Activated CD8-positive, alpha-beta memory T cell treated with anti-CD3 and anti-CD28 coated beads, Interleukin-2, amount 10 ng/mL, durations not matched to agents 7 days and 5 days (primary cell): ENCODE measurements at regions of chr2 and their contacts with region 1.

Region 1: GRCh38 chr2:68751397-68752339 is 17.1 kb downstream of the ARHGAP25 start:
- DNase-seq: peak; percentile 95
- ATAC-seq: peak; percentile 92
- H3K4me3 Mint-ChIP-seq: peak overlapping the region; percentile 27
- H3K27ac Mint-ChIP-seq: peak overlapping the region; percentile 77
- H3K4me1 Mint-ChIP-seq: peaks cover 88% of the 10 kb centered on the region
- H3K27me3 Mint-ChIP-seq: no peaks in the 10 kb centered on the region

Region 2: DNA sequence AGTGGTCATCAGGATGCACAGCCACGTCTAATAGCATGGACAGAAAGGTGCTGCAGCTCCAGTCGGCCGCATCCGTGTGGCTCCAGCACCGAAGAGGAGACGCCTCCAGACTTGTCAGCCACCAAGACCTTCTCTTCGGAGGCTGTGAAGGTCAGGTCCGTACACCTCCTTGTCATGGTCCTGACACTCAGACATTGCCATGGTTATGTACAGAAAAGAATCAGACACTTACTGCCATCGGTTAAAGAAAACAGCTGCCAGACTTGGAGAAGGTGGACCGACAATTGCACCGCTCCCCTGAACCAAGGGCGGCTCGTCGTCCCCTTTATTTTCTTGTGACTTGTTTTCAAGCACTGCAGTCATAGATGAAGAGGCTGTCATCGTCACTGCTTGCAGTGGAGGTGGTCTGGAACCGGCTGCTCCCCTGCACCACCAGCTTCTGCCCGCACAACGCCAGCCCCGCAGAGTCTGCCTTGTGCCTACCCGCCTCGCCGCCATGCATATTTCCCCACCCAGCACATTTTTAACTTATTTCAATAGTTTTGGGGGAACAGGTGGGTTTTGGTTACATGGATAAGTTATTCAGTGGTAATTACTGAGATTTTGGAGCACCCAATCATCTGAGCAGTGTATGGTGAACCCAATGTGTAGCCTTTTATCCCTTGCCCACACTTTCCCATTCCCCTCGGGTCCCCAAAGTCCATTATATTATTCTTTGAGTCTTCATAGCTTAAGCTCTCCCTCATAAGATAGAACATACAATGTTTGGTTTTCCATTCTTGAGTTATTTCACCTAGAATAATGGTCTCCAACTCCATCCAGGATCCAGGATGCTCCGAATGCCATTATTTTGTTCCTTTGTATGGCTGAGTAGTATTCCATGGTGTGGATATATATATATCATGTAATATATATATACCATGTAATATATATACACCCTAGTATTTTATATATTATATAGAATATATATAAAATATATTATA is 302.7 kb before region 1 on chr2:
- CTCF ChIA-PET with region 1: no interaction called
- DNase-seq: peak; percentile 50
- ATAC-seq: peak; percentile 50
- H3K4me3 Mint-ChIP-seq: no peak overlapping the region
- H3K27ac Mint-ChIP-seq: no peak overlapping the region
- H3K4me1 Mint-ChIP-seq: peaks cover 3% of the 10 kb centered on the region
- H3K27me3 Mint-ChIP-seq: no peaks in the 10 kb centered on the region

Region 3: GRCh38 chr2:68467077-68467960 is 284.3 kb before region 1 on chr2 and contains the starts of genes APLF and FBXO48:
- CTCF ChIA-PET with region 1: interaction called, 35 read pairs
- DNase-seq: peak; percentile 99
- ATAC-seq: peak; percentile 90
- H3K4me3 Mint-ChIP-seq: peak within 1 kb of the TSS; percentile 100
- H3K27ac Mint-ChIP-seq: peak within 1 kb of the TSS; percentile 93
- H3K4me1 Mint-ChIP-seq: peaks cover 39% of the 10 kb centered on the region
- H3K27me3 Mint-ChIP-seq: no peaks in the 10 kb centered on the region
- total RNA-seq, gene APLF: 3.0 to 3.3 TPM
- total RNA-seq, gene FBXO48: 3.3 to 3.4 TPM

Region 4: DNA sequence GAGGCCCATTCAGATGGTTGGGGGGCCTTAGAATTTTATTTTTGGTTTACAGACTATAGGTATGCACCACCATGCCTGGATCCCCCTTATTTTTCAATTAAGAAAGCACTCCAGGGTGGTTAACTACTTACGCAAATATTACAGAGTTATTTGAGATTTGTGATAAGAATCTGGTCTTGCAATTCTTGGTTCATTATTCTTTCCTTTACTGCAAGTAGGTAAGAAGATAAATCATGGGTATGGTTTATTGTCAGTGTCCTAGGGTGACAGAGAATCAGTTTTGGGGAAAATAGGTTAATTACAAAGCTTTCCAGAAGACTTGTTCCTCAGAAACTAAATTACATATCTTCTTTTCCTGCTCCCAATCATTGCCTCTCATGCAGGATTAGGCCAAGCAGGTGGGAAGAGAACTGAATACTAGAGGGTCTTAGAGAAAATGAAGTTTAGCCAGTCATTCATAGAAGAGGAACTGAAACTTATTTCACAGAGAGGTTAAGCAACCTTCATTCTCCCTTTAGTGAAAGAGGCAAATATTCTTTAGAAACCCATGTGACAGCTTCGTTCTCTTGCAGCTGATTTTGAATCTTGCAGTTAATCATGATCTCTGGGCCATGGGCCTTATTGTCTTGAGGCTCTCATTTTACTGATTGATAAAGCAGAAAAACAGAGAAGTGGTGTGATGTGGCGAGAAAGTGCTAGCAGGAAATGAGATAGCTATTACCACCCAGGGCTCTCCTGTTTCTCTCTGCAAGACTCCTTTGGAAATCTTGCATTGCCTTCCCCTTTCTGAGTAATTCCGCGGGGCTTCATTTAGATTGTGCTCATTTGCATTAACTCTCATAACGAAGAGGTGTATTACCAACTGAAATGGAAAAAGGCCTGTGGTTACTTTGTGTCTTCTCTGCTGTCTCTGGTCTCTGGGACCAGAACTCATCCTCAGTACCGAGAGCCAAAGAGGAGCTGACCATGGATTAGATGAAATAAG is 61.8 kb before region 1 on chr2:
- CTCF ChIA-PET with region 1: no interaction called
- DNase-seq: no peak
- ATAC-seq: peak; percentile 57
- H3K4me3 Mint-ChIP-seq: no peak overlapping the region
- H3K27ac Mint-ChIP-seq: peak overlapping the region; percentile 44
- H3K4me1 Mint-ChIP-seq: peaks cover 20% of the 10 kb centered on the region
- H3K27me3 Mint-ChIP-seq: peaks cover 16% of the 10 kb centered on the region

Region 5: DNA sequence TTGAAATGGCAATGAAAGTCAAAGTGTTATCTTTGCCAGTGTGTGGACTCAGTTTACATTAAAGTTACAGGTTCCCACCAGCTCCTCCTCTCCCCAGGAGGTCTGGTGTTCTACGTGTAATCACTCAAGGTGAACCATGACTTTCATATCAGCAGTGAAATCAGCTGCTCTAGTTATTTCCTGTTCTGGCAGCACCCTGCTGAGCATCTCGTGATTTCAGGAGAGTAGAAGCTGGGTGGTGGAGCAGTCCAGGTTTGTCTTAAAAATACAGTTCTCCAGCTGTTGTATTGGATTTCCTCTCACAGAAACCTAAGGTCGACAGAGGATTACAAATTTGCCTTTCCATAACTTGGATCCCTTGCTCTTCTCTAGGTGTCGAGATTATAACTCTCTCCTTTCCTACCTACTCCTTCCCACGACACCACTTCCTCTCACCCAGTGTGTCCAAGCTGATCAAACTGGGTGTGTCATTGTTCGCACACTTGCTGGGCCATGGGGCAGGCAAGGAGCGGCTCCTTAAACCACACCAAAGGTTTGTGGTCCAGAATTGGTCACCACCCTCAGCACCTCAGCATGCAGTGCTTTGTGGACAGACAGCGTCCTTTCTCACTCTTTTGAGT is 30.1 kb before region 1 on chr2:
- CTCF ChIA-PET with region 1: interaction called, 22 read pairs
- DNase-seq: peak; percentile 71
- ATAC-seq: peak; percentile 52
- H3K4me3 Mint-ChIP-seq: peak overlapping the region; percentile 46
- H3K27ac Mint-ChIP-seq: peak overlapping the region; percentile 87
- H3K4me1 Mint-ChIP-seq: peaks cover 97% of the 10 kb centered on the region
- H3K27me3 Mint-ChIP-seq: no peaks in the 10 kb centered on the region

Region 6: DNA sequence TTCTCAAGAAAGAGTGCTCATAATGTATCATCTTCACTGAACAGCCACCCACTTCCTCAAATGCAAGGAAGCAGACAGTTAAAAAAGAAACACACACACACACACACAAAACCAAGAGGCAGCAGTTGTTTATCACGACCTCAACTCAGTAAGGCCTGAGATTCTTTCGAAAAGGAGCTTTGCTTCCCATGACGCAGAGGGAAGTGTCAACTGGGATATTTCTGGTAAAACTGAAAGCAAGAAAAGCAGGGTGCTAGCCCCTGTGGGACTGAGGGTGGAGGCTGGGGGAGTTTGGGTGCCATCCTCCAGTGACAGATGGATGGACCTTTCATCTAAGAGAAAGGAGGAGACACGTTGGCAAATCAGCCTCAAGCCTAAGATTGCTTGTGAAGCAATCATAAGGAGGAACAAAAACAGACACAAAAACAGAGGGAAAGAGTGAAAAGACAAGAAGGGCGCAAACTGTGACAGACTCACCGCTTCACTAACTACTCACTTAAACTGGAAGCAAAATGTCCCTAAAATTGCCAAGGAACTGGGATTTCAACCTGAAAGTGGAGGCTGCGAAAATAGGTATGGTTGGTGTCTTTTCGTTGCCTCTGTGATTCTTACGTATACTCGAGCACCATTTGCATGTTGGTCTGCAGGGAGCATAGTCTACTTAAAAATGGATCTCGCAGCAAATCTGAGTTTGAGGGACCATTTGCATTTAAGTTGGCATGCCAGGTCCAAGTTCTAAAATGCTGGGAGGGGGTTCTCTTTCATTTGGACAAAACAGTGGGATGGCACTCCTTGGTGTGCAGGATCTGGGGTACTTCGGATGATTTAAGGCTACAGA is 16.8 kb before region 1 on chr2 and contains the start of gene ARHGAP25:
- CTCF ChIA-PET with region 1: interaction called, 117 read pairs
- DNase-seq: peak; percentile 80
- ATAC-seq: peak; percentile 64
- H3K4me3 Mint-ChIP-seq: no peak within 1 kb of the TSS
- H3K27ac Mint-ChIP-seq: no peak within 1 kb of the TSS
- H3K4me1 Mint-ChIP-seq: peaks cover 35% of the 10 kb centered on the region
- H3K27me3 Mint-ChIP-seq: no peaks in the 10 kb centered on the region
- total RNA-seq, gene ARHGAP25: 90.2 to 126 TPM

Region 7: DNA sequence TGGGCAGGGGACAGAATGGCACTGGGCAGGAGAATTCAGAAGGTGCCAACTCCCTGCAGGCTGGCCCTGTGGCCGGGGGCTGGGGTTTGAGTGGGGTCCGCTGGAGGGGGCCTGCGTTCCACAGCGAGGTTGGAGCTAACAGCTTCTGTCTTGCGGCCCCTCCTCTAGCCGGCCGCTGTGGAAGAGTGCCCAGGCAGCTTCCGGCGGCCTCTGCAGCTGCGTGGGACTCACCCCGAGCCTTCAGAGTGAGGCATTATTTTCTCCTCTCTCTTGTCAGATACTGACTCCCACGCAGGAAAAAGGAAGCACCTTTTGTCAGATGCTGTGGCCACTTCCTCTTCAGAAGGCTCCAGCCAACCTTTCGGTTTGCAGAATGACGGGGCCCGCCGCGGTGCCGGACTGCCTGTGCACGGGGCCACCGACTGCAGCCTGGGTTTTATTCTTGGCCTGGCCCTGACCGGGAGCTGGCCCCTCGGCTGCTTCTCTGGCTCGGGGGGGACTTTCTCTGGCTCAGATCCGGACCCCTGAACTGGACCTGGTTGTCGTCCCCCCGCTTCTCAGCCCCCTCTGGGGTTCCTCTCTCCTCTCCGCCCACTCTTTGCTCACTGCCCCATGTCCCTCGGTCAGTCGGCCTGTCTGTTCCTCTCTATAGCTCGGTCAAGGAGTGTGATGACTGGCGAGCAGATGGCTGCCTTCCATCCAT is 23.1 kb after region 1 on chr2:
- CTCF ChIA-PET with region 1: interaction called, 84 read pairs
- DNase-seq: peak; percentile 88
- ATAC-seq: peak; percentile 75
- H3K4me3 Mint-ChIP-seq: peak overlapping the region; percentile 79
- H3K27ac Mint-ChIP-seq: peak overlapping the region; percentile 94
- H3K4me1 Mint-ChIP-seq: peaks cover 83% of the 10 kb centered on the region
- H3K27me3 Mint-ChIP-seq: no peaks in the 10 kb centered on the region

Region 8: DNA sequence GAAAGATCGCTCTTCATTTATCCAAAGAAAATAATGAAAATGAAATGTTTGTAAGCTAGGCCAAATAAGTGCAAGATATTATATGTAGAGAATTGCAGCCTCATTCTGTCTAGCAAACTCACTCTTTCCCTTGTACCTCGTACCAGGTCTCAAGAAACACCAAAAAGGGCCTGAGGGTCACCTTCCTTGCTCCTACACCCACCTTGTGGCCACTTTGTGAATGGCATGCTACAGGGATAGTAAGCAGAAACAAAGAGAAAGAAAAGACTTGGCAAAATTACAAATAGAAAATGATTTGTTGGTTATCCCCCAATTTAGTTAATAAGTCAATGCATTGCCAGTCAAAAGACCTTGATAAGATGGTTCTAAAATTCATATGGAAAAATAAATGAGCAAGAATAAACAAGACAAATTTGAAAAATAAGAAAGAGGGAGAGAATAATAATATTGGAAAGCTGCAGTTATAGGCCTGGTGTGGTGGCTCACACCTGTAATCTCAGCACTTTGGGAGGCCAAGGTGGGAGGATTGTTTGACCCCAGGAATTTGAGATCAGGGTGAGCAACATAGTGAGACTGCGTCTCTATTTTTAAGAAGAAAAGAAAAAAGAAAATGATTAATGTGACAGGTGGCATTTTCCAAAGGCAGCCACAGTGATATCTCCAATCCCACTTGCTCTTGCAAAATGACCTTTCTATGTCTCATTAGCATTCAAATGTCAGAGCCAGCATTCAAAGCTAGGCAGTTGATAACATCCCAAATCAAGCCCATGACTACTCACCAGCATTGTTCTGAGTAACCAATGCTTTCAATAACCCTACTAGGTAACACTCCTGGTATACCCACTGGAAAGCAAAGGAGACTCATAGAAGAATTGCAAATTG is 158.4 kb after region 1 on chr2:
- CTCF ChIA-PET with region 1: interaction called, 15 read pairs
- DNase-seq: peak; percentile 89
- ATAC-seq: no peak
- H3K4me3 Mint-ChIP-seq: no peak overlapping the region
- H3K27ac Mint-ChIP-seq: peak overlapping the region; percentile 77
- H3K4me1 Mint-ChIP-seq: peaks cover 40% of the 10 kb centered on the region
- H3K27me3 Mint-ChIP-seq: no peaks in the 10 kb centered on the region